Mucosa of descending colon (tissue), 3 donors: ENCODE measurements at regions of chr13 and their contacts with region 1.

Region 1: DNA sequence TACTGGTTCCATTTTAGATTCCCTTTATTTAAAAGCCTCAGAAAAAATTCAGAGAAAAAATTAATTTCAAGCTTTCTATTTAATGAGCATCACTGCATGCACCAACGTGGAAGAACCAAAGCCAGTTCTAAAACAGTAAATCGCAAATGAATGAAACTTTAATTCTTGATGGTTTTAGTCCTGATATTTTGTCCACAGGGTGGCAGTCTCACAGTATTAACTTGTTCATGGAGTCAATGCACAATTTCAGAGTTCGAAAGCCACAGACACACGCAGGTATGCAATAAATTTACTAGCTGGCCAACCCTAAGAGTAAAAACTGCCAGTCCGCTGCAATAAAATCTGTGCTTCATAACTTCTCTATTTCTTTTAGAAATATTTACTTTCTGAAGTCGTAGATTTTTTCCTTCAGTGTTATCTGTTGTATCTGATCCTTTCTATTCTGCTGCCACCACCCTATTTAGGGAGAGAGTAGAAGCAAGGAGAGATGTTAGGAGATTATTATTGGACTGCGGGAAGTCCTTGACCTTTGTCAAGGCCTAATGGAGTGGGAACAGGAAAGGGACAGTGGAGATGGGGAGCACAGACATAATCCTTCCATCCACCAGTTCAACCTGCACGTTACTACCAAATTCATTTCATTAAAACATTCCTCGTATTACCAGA is 7.0 kb upstream of the WBP4 start:
- DNase-seq: peak in 1 of 3 donors; percentile 87
- ATAC-seq: peak; percentile 86
- H3K4me3 ChIP-seq: no peak overlapping the region
- H3K4me1 ChIP-seq: peaks cover 61% of the 10 kb centered on the region
- CTCF ChIP-seq: no peak

Region 2: DNA sequence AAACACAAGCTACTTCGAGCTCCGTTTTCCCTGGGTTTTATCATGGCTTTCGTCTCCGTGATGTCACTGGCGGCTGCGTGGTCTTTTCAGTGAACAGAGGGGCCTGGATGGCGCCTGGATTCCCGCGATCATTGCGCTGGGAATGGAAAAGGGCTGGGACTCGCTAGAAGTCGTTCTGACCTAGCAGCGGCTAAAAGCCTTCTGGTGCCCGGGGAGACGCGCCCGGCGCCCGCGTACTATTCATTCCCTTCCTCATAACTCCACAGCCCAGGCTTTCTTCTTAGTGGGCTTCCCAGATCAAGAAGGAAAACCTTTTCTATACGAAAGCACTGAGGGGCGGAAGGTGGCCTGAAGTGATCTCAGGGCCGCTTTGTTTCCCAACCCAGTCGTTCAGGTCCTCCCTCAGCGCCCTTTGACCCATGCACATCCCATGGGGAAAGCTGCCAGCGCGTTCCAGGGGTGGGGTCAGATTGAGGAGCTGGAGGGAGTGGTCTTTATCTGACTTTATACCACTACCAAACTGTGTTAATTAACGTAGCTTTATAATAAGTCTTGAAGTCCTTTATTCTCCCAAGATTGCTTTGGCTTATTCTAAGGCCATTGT is 131.8 kb before region 1 on chr13:
- intact Hi-C with region 1: loop called (anchors 10 kb)
- DNase-seq: peak; percentile 74 to 84 (median 81)
- ATAC-seq: peak; percentile 43
- H3K4me3 ChIP-seq: no peak overlapping the region
- H3K4me1 ChIP-seq: peaks cover 13% of the 10 kb centered on the region
- CTCF ChIP-seq: no peak

Region 3: GRCh38 chr13:41019011-41019487 is 35.3 kb before region 1 on chr13 and contains the start of gene ELF1:
- intact Hi-C with region 1: loop called in 1 of 2 experiments (anchors 5 kb)
- DNase-seq: peak in 2 of 3 donors; percentile 51 to 83
- ATAC-seq: peak; percentile 94
- H3K4me3 ChIP-seq: peak within 1 kb of the TSS; percentile 23
- H3K4me1 ChIP-seq: peaks cover 30% of the 10 kb centered on the region
- CTCF ChIP-seq: no peak
- total RNA-seq, gene ELF1: 80.2 to 111 (median 96.8) TPM